ENCODE measurements at regions of chr3 and their contacts with region 1.

Region 1: GRCh38 chr3:38496131-38496910 is at the start of gene EXOG:
- DNase-seq: peak; percentile 99
- CTCF ChIP-seq: peak; percentile 92

Region 2: DNA sequence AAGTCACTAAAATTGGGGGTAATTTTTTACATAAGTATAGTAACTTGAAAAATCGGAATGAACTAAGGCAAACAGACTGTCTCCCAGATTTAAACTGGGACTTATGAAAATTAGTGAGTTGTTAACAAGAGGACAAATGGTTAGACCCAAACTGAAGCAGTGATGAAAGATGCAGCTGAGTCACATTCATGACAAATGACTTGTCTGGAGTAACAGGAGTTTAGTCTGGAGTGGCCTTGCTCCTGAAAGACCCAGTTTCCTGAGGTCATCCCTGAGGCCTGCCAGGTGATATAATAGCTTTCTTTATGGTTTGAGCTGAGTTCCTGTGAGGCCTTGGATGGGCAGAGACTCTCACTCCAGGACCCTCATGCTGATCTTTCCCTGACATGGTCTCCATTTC is 644.2 kb before region 1 on chr3:
- CTCF ChIA-PET with region 1: no interaction called
- POLR2A ChIA-PET with region 1: no interaction called
- DNase-seq: no peak
- CTCF ChIP-seq: no peak

Region 3: GRCh38 chr3:38360345-38360744 is 136.0 kb before region 1 on chr3:
- CTCF ChIA-PET with region 1: no interaction called
- POLR2A ChIA-PET with region 1: no interaction called
- DNase-seq: no peak
- CTCF ChIP-seq: no peak

Region 4: GRCh38 chr3:38479431-38480092 is 16.8 kb before region 1 on chr3:
- CTCF ChIA-PET with region 1: interaction called, 17 read pairs
- POLR2A ChIA-PET with region 1: no interaction called
- DNase-seq: peak; percentile 79
- CTCF ChIP-seq: peak; percentile 91

Region 5: GRCh38 chr3:38507120-38507519 is 10.8 kb after region 1 on chr3:
- CTCF ChIA-PET with region 1: interaction called, 50 read pairs
- POLR2A ChIA-PET with region 1: no interaction called
- DNase-seq: peak; percentile 54
- CTCF ChIP-seq: no peak

Region 6: DNA sequence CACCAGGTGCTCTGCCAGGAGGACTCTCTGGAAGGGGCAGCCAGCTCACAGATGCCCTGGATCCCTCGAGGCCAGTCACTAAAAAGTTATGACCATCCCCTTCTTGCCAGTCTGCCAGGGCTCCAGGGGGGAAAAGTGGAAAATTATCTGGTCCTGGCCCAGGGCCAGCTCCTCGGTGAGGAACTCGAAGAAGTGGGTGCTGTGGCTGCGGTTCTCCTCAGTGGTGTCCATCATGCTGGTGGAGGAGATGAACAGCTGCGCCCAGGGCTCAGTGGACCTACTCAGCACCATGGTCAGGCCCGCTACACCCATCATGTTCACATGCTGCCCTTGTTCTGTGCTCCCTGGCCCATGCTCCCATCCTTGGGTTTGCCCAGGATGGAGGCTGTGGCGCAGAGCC is 19.0 kb after region 1 on chr3:
- CTCF ChIA-PET with region 1: interaction called, 50 read pairs
- POLR2A ChIA-PET with region 1: interaction called, 3 read pairs
- DNase-seq: no peak
- CTCF ChIP-seq: no peak

Region 7: DNA sequence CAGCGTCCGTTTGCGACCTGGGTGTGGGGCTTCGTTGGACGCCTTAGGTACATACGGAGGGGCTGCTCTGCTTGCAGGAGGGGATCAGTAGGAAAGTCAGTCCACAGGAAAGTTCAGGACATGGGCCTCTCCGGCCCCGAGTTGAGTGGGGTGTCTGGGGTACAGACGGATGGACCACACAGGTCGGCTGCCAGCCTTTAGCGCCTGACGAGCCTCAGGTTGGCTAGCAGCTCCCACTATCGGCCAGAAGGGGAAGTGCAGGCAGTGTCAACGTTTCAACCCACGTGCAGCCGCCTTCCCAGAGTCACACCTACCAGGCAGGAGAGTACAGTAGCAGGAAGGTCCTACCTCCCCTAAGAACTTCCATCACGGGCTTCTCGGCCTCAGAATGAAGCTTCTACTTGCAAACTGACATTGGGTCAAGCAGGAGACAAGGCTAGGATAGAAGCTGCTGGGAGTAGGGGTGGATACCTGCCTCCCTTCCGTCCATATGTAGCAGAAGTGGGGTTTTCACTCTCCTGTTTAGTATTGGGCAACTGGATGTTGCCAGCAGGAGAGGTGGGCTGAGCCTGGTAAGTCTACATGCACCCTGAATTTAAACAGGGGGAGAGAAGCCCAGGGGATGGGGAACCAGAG is 155.0 kb after region 1 on chr3:
- CTCF ChIA-PET with region 1: interaction called, 16 read pairs
- POLR2A ChIA-PET with region 1: no interaction called
- DNase-seq: peak; percentile 84
- CTCF ChIP-seq: peak; percentile 99